PC-3 (cell line): ENCODE measurements at regions of chr2 and their contacts with region 1.

Region 1: GRCh38 chr2:117058366-117058765 is 756.1 kb upstream of the DDX18 start:
- DNase-seq: no peak
- ATAC-seq: no peak
- H3K4me3 ChIP-seq: no peak overlapping the region
- H3K27ac ChIP-seq: no peak overlapping the region
- H3K4me1 ChIP-seq: no peaks in the 10 kb centered on the region
- H3K27me3 ChIP-seq: no peaks in the 10 kb centered on the region
- CTCF ChIP-seq: no peak

Region 2: GRCh38 chr2:116776556-116776955 is 281.8 kb before region 1 on chr2:
- CTCF ChIA-PET with region 1: no interaction called
- POLR2A ChIA-PET with region 1: no interaction called
- intact Hi-C with region 1: no loop called
- DNase-seq: no peak
- ATAC-seq: no peak
- H3K4me3 ChIP-seq: no peak overlapping the region
- H3K27ac ChIP-seq: no peak overlapping the region
- H3K4me1 ChIP-seq: no peaks in the 10 kb centered on the region
- H3K27me3 ChIP-seq: no peaks in the 10 kb centered on the region
- CTCF ChIP-seq: no peak

Region 3: GRCh38 chr2:117349687-117350086 is 291.3 kb after region 1 on chr2:
- CTCF ChIA-PET with region 1: interaction called, 10 read pairs
- POLR2A ChIA-PET with region 1: no interaction called
- intact Hi-C with region 1: no loop called
- DNase-seq: no peak
- ATAC-seq: no peak
- H3K4me3 ChIP-seq: no peak overlapping the region
- H3K27ac ChIP-seq: no peak overlapping the region
- H3K4me1 ChIP-seq: no peaks in the 10 kb centered on the region
- H3K27me3 ChIP-seq: no peaks in the 10 kb centered on the region
- CTCF ChIP-seq: no peak